Heart left ventricle (tissue), 16 donors: ENCODE measurements at regions of chr12 and their contacts with region 1.

Region 1: DNA sequence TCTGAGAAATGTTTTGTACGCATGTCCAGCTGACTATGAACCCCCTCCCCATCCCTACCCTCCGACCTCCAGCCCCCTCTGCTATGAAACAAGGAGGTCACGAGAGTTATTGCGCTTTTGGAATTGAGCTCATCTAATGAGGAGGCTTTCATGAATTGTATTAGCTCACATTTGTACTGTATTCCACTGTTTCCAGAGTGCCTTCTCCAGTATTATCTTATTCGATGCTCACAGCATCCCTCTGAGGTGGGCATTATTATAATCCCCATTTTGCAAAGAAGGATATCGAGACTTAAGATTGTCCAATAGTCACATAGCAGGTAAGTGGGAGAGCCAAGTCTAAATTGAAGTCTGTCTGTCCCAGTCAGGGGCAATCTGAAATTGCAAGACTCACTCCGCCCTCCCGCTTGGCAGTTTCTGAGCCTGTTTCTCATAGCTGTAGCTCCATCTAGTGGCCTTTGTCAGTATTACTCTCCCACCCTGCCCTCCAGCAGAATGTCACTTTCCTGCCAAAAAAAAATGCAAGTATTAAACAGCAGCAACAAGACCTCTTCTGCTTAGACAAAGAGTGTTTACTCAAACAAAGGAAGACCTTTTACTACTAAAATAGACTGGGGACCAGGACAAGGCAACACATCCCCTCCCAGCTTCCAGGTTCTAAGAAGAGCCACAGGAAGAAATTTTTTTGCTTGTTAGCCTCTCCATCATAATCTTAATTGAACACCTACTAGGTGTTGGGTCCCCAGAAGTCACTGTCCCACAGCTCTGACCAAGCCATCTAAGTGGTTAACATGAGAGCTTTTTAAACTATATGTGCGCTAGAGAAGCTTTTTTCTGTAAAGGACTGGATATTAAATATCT is 48.6 kb upstream of the TMEM233 start:
- DNase-seq: peak in 4 of 5 donors; percentile 41 to 65 (median 56)
- ATAC-seq: peak in 3 of 4 donors; percentile 50 to 62 (median 62)
- H3K4me3 ChIP-seq: no peak overlapping the region
- H3K27ac ChIP-seq: no peak overlapping the region
- H3K4me1 ChIP-seq: no peaks in the 10 kb centered on the region
- H3K27me3 ChIP-seq: peaks cover 0 to 4% (median 0%) of the 10 kb centered on the region in 9 donors
- CTCF ChIP-seq: peak; percentile 78 to 91 (median 88)
- POLR2A ChIP-seq: no peak

Region 2: GRCh38 chr12:118404876-118405521 is 1140.0 kb before region 1 on chr12:
- intact Hi-C with region 1: loop called in 7 of 10 experiments (anchors 2 to 10 kb)
- DNase-seq: peak in 4 of 5 donors; percentile 37 to 52 (median 44)
- ATAC-seq: peak in 2 of 4 donors; percentile 41 to 53
- H3K4me3 ChIP-seq: no peak overlapping the region
- H3K27ac ChIP-seq: peak overlapping the region in 1 of 12 donors; percentile 0
- H3K4me1 ChIP-seq: peaks cover 0 to 2% (median 0%) of the 10 kb centered on the region in 12 donors
- H3K27me3 ChIP-seq: no peaks in the 10 kb centered on the region
- CTCF ChIP-seq: peak; percentile 55 to 79 (median 71)
- POLR2A ChIP-seq: no peak

Region 3: DNA sequence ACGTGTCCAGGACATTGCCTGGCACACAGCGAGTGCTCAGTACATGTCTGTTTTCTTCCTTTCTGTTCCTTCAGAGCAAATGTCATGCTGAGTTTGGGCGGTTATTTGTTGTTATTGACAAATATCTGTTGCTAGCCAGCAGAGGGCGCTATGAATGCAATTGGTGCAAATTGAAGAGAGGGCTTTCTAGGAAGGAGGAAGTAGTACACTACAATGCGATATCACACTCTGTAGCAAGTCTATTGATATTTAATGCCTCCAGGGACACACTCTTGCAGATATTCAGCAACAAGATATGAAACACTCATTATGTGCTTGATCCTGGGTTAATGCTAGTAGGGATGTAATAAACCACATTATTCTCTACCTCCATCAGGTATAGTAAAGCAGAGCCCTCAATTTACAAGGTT is 830.9 kb before region 1 on chr12:
- intact Hi-C with region 1: loop called in 1 of 10 experiments (anchors 10 kb)
- DNase-seq: no peak
- ATAC-seq: no peak
- H3K4me3 ChIP-seq: no peak overlapping the region
- H3K27ac ChIP-seq: no peak overlapping the region
- H3K4me1 ChIP-seq: no peaks in the 10 kb centered on the region
- H3K27me3 ChIP-seq: peaks cover 0 to 7% (median 0%) of the 10 kb centered on the region in 9 donors
- CTCF ChIP-seq: peak in 11 of 12 donors; percentile 15 to 45 (median 34)
- POLR2A ChIP-seq: no peak

Region 4: DNA sequence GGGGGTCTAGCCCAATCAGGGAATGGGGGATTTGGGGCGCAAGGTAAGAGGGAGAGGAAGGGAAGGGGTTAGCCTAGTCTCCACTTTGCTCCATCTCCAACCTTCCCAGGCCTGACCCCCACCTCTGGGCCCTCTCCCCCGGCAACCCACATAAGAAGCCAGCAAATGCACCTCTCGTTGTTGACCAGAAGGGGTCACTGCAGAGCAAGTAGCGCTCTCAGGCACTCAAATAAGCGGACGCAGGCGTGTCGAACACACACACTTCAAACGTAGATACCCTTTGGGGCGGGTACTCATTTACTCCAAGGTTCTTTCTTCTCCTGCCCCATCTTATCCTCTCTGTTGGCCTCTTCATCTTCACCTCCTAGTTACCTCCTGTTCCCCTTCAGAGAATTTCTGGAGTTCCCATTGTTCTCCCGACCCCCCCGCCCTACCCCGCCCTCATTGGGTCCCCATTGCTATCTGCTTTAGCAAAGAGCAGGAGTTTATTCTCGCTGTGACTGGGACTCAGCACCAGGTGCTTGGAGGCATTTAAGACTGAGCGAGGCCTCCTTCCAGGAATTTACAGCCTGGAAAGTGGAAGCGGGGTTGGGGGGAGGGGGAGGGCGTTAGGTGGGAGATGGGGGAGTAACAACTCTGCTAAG is 565.1 kb before region 1 on chr12:
- intact Hi-C with region 1: loop called in 5 of 10 experiments (anchors 5 to 10 kb)
- DNase-seq: peak in 4 of 5 donors; percentile 21 to 42 (median 29)
- ATAC-seq: peak in 3 of 4 donors; percentile 52 to 60 (median 55)
- H3K4me3 ChIP-seq: no peak overlapping the region
- H3K27ac ChIP-seq: no peak overlapping the region
- H3K4me1 ChIP-seq: peaks cover 0 to 20% (median 1%) of the 10 kb centered on the region in 12 donors
- H3K27me3 ChIP-seq: peaks cover 12 to 79% (median 37%) of the 10 kb centered on the region in 9 donors
- CTCF ChIP-seq: peak; percentile 49 to 73 (median 62)
- POLR2A ChIP-seq: no peak

Region 5: DNA sequence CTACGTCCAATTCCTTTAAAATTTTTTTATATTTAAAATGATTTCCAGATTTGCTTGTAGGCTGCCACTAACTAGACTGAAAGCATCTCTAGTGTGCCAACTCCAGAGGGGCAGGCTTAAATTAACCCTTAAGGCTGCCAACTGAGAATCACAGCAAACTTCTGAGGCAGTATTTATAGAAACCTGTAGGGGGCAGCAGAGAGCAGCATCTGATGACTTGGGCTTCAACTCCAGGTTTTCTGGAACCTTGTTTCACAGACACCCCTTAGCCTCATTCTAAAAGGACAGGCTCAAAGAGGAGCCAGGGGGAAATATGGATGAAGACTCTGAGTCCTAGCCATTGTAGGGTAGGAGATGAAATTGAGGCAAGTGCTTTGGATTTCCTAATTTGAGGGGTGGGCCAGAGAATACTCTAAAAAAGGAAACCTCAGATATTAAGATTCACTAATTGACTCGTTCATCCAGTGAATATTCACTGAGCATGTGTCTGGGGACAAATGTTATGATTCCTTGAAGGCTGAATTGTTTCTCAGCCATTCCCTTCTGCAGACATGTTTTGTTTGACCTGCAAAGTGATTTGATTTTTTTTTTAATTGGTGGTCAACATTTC is 429.6 kb before region 1 on chr12:
- intact Hi-C with region 1: loop called in 7 of 10 experiments (anchors 2 to 10 kb)
- DNase-seq: peak in 2 of 5 donors; percentile 35
- ATAC-seq: peak in 3 of 4 donors; percentile 31 to 57 (median 37)
- H3K4me3 ChIP-seq: no peak overlapping the region
- H3K27ac ChIP-seq: no peak overlapping the region
- H3K4me1 ChIP-seq: peaks cover 0 to 3% (median 0%) of the 10 kb centered on the region in 12 donors
- H3K27me3 ChIP-seq: peaks cover 0 to 4% (median 0%) of the 10 kb centered on the region in 9 donors
- CTCF ChIP-seq: peak; percentile 82 to 97 (median 93)
- POLR2A ChIP-seq: no peak

Region 6: DNA sequence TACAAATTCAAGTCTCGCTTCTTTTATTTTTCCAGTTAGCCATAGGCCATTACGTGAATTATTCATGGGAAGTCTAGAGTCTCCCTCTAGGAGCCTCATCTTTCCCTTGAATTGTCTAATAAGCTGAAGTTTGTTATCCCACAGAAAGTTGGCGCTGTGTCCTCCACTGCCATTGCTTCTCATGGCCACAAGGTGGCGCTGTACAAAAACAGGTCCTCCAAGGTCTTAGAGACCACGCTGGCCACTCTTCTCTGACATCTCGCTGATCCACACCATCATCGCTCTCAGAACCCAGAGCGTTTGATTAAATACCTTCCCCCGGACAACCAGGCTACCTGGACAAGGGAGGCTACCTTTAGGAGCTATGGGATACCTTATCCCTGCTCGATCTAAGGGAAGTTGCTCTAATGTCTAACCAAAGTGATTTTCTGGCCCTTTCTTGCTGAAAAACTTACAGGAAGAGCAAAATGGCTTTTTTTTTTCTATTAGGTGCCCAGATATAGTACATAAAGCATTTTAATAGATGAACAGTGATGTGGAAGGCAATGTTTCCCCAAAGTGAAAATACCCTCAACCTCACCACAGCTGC is 100.4 kb before region 1 on chr12:
- intact Hi-C with region 1: loop called in 8 of 10 experiments (anchors 1 to 10 kb)
- DNase-seq: peak in 4 of 5 donors; percentile 12 to 32 (median 24)
- ATAC-seq: peak in 1 of 4 donors; percentile 36
- H3K4me3 ChIP-seq: no peak overlapping the region
- H3K27ac ChIP-seq: no peak overlapping the region
- H3K4me1 ChIP-seq: no peaks in the 10 kb centered on the region
- H3K27me3 ChIP-seq: peaks cover 0 to 4% (median 0%) of the 10 kb centered on the region in 9 donors
- CTCF ChIP-seq: peak; percentile 59 to 92 (median 76)
- POLR2A ChIP-seq: no peak

Region 7: DNA sequence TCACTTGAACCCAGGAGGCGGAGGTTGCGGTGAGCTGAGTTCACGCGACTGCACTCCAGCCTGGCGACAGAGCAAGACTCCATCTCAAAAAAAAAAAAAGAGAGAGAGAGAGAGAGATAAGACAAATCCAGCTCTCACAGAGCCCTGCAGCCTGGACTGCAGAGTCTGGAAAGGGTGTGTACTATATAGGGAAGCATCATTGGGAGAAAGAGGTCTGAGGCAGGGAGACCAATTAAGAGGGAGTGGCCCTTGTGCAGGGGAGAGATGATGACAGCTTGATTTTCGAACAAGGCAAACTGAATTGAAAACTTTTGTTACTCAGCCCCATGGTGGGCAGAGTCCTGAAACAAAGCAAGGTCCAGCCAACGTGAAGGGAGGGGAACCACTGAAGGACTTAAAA is 94.2 kb before region 1 on chr12:
- intact Hi-C with region 1: loop called in 5 of 10 experiments (anchors 2 to 10 kb)
- DNase-seq: no peak
- ATAC-seq: no peak
- H3K4me3 ChIP-seq: no peak overlapping the region
- H3K27ac ChIP-seq: no peak overlapping the region
- H3K4me1 ChIP-seq: no peaks in the 10 kb centered on the region
- H3K27me3 ChIP-seq: no peaks in the 10 kb centered on the region
- CTCF ChIP-seq: no peak
- POLR2A ChIP-seq: no peak